Sigmoid colon (tissue), 7 donors: ENCODE measurements at regions of chr16 and their contacts with region 1.

Region 1: DNA sequence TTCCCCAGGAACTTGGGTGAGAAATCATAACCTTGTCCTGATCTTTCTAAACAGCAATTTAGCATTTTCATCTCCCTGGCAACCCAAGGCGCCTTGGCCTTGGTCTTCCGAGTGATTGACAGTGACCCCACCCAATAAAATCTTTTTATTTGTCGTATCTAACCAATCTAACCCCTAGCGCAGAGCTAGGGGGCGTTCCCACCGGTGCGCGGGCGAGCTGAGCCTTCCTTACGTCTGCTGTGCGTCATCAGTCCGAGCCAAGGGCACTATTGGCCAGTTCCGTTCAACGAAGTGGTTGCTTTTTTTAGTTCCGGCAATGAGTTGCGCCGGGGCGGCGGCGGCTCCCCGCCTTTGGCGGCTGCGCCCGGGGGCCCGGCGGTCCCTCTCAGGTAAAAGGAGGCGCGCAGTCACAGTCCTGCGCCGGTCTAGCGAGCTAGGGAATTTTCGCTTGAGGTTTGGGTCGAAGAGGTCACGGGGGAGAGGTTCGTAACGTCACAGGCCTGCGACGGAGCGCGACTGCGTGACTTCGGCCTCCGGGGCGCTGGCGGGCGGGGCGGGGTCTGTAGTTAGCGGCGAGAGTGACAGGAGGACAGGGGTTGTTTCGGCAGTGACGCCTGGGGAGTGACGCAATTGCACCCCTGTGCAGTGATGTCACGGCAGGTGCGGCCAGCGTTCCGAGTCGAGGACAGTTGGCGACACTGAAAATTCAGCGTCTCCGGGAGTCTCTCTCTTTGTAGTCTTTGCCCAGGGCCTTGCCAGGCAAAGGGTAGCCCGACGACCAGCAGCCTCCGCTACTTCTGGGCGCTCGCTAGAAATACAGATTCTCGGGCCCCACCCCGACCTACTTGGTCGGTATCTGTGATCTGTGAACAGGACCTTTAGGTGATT is at the start of gene COQ7:
- DNase-seq: peak; percentile 99
- H3K4me3 ChIP-seq: peak within 1 kb of the TSS; percentile 61 to 89 (median 79)
- H3K27ac ChIP-seq: peak within 1 kb of the TSS; percentile 97 to 99 (median 98)
- H3K4me1 ChIP-seq: peaks cover 0 to 21% (median 15%) of the 10 kb centered on the region in 4 donors
- H3K27me3 ChIP-seq: no peaks in the 10 kb centered on the region
- CTCF ChIP-seq: no peak
- EP300 ChIP-seq: peak in 2 of 4 donors; percentile 34 to 42
- POLR2A ChIP-seq: peak; percentile 8 to 62
- total RNA-seq, gene COQ7: 17.1 to 21.3 (median 18.8) TPM

Region 2: GRCh38 chr16:18789850-18790724 is 277.5 kb before region 1 on chr16 and contains the start of gene RPS15A:
- intact Hi-C with region 1: loop called (anchors 10 kb)
- DNase-seq: peak; percentile 98
- H3K4me3 ChIP-seq: peak within 1 kb of the TSS; percentile 65 to 93 (median 84)
- H3K27ac ChIP-seq: peak within 1 kb of the TSS; percentile 75 to 89 (median 86)
- H3K4me1 ChIP-seq: peaks cover 0 to 50% (median 44%) of the 10 kb centered on the region in 4 donors
- H3K27me3 ChIP-seq: no peaks in the 10 kb centered on the region
- CTCF ChIP-seq: no peak
- EP300 ChIP-seq: peak in 1 of 4 donors; percentile 36
- POLR2A ChIP-seq: peak; percentile 82 to 83
- total RNA-seq, gene RPS15A: 1,724 to 5,149 (median 4,033) TPM

Region 3: GRCh38 chr16:18932243-18932981 is 135.2 kb before region 1 on chr16:
- intact Hi-C with region 1: loop called (anchors 5 kb)
- DNase-seq: no peak
- H3K4me3 ChIP-seq: no peak overlapping the region
- H3K27ac ChIP-seq: peak overlapping the region in 2 of 4 donors; percentile 41 to 76
- H3K4me1 ChIP-seq: peaks cover 0 to 10% (median 0%) of the 10 kb centered on the region in 4 donors
- H3K27me3 ChIP-seq: no peaks in the 10 kb centered on the region
- CTCF ChIP-seq: no peak
- EP300 ChIP-seq: no peak
- POLR2A ChIP-seq: no peak

Region 4: DNA sequence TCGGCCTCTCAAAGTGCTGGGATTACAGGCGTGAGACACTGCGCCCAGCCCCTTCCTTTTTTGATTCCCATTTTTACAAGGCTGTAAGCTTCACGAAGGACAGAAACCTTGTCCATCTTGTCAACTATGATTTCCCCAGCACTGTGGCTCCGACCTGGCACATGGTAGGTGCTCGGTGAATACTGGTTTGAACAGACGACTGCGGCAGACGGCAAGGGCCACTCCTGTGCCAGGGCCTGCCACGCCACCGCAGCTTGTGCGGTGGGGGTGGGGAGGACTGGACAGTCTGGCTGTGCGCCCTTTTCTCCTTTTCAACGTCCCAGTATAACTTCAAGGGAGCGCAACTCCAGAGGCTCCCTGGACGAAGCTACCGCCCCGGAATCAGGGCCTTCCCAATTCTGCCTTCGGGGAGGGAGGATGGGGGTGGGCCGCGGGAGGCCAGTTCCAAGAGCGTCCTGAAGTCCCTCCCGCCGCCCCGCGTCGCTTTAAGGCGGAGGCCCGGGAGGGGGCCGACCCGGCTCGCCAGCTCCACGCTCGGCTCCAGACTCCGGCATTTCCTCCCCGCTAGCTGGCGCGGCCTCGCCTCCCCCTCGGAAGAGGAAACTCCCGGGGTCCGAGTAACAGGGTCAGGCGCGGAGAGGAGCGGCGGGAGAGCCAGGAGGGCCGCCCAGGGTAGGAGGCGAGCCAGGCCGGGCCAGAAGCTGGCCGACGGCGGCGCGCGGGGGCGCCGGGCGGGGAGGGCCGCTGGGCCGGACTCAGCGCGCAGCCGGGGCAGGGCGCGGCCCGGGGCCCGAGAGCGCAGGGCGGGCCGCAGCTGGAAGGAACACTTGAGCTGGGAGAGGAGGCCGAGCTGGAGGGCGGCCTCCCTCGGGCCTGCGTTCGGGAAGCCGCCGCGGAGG is 46.1 kb after region 1 on chr16 and contains the start of gene ITPRIPL2:
- intact Hi-C with region 1: loop called (anchors 5 kb)
- DNase-seq: peak; percentile 95
- H3K4me3 ChIP-seq: peak within 1 kb of the TSS; percentile 57 to 90 (median 69)
- H3K27ac ChIP-seq: peak within 1 kb of the TSS; percentile 91 to 97 (median 96)
- H3K4me1 ChIP-seq: peaks cover 0 to 52% (median 43%) of the 10 kb centered on the region in 4 donors
- H3K27me3 ChIP-seq: no peaks in the 10 kb centered on the region
- CTCF ChIP-seq: no peak
- EP300 ChIP-seq: no peak
- POLR2A ChIP-seq: peak; percentile 46 to 71
- total RNA-seq, gene ITPRIPL2: 28.1 to 61.6 (median 44.2) TPM